Dendritic cell treated with granulocyte-macrophage colony-stimulating factor and Interleukin-4, amounts not matched to agents 40 ng/mL and 50 ng/mL, for 4 days (primary cell): ENCODE measurements at regions of chr2 and their contacts with region 1.

Region 1: GRCh38 chr2:98012561-98012991 is 16.8 kb upstream of the TMEM131 start:
- H3K4me3 Mint-ChIP-seq: no peak overlapping the region
- H3K27ac Mint-ChIP-seq: no peak overlapping the region
- H3K4me1 Mint-ChIP-seq: peaks cover 63% of the 10 kb centered on the region
- H3K27me3 Mint-ChIP-seq: peaks cover 49% of the 10 kb centered on the region

Region 2: DNA sequence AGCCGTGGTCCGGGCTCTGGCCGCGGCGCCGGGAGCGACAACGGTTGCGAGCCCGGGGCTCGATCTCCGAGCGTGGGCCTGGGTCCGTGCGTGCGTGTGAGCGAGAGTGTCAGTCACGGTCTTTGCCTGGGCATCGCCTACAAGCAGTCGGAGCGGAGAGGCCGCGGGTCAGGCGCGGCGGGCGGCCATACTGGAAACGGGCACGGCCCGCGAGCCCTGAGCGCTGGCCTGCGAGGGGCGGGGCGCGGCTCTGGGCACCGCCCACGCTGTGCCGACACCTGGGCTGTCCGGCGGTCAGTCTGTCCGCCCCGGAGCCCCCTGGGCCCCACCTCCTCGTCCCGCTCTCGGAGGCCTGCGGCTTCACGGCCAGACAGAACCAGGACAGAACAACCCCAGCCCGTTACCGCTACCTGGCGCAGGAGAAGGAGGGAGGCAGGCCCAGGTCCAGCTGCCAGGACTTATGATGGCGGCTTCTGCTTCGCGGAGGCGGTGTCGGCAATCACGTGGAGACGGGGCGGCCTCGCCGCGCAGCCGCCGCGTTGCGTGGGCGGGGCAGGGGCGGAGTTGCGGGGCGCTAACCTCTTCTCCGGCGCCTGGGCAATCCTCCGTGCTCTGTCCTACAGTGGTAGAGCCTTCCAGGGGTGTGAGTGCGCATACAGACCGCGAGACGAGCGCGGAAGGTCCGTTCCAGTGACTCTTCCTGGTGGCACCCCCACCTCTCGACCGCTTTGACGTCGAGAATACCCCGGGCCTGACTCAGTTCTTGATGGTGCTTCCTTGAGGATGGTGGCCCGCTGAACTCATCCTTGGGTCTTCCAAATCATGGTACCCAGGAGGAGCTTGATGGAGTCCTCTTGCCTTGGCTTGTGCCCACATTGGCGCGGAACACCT is 16.6 kb before region 1 on chr2 and contains the start of gene TMEM131:
- intact Hi-C with region 1: loop called (anchors 1 kb)
- H3K4me3 Mint-ChIP-seq: peak within 1 kb of the TSS; percentile 89
- H3K27ac Mint-ChIP-seq: peak within 1 kb of the TSS; percentile 91
- H3K4me1 Mint-ChIP-seq: peaks cover 35% of the 10 kb centered on the region
- H3K27me3 Mint-ChIP-seq: peaks cover 24% of the 10 kb centered on the region

Region 3: DNA sequence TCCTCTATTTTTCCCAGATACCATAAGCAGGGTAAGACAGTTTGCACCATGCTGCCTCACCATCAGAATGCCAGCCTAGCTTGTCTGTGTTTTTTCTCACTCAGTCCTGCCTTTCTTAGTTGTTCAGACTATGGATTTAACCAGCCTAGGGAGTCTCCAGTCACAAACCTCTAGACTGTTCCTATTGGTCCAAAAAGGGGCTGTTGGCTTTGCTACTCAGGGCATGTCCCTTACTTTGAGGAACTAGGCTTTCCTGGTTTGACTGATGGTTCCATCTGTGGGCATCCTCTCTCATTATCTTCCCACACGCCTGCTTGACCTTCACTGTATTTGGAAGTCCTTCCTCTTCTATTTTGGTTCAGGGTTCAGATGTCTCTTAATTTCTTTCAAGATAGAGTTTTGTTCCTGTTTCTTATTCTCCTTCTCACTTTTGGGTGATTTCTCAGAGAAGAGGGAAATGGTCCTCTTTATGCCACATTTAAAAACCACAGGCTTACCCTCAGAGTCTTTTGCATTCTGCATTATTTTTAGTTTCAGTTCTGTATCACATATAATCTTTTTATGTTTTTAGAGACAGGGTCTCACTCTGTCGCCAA is 14.4 kb after region 1 on chr2:
- intact Hi-C with region 1: loop called (anchors 1 kb)
- H3K4me3 Mint-ChIP-seq: peak overlapping the region; percentile 15
- H3K27ac Mint-ChIP-seq: peak overlapping the region; percentile 47
- H3K4me1 Mint-ChIP-seq: peaks cover 45% of the 10 kb centered on the region
- H3K27me3 Mint-ChIP-seq: peaks cover 84% of the 10 kb centered on the region

Region 4: GRCh38 chr2:98134172-98135005 is 121.8 kb after region 1 on chr2:
- intact Hi-C with region 1: loop called (anchors 5 kb)
- H3K4me3 Mint-ChIP-seq: no peak overlapping the region
- H3K27ac Mint-ChIP-seq: no peak overlapping the region
- H3K4me1 Mint-ChIP-seq: peaks cover 37% of the 10 kb centered on the region
- H3K27me3 Mint-ChIP-seq: peaks cover 83% of the 10 kb centered on the region